ENCODE measurements at regions of chr18 and their contacts with region 1.

Region 1: GRCh38 chr18:3245853-3246634 is 1.6 kb upstream of the MYL12A start:
- DNase-seq: peak; percentile 43 to 89
- ATAC-seq: peak; percentile 79 to 83
- H3K4me3 ChIP-seq: peak overlapping the region; percentile 41
- H3K27ac ChIP-seq: peak overlapping the region; percentile 93 to 98
- H3K4me1 ChIP-seq: peaks cover 24% of the 10 kb centered on the region
- CTCF ChIP-seq: peak; percentile 81
- EP300 ChIP-seq: no peak
- POLR2A ChIP-seq: no peak
- RAD21 ChIP-seq: peak; percentile 96 to 97

Region 2: GRCh38 chr18:2774669-2775068 is 471.4 kb before region 1 on chr18:
- CTCF ChIA-PET with region 1: interaction called, 22 read pairs
- POLR2A ChIA-PET with region 1: no interaction called
- DNase-seq: no peak
- ATAC-seq: no peak
- H3K4me3 ChIP-seq: no peak overlapping the region
- H3K27ac ChIP-seq: no peak overlapping the region
- H3K4me1 ChIP-seq: no peaks in the 10 kb centered on the region
- CTCF ChIP-seq: no peak
- EP300 ChIP-seq: no peak
- POLR2A ChIP-seq: no peak
- RAD21 ChIP-seq: no peak

Region 3: GRCh38 chr18:2932247-2933181 is 313.5 kb before region 1 on chr18:
- CTCF ChIA-PET with region 1: interaction called, 35 read pairs
- POLR2A ChIA-PET with region 1: interaction called, 3 read pairs
- DNase-seq: peak; percentile 21 to 50
- ATAC-seq: peak; percentile 54 to 55; a peak in 4 of 6 replicates
- H3K4me3 ChIP-seq: no peak overlapping the region
- H3K27ac ChIP-seq: peak overlapping the region; percentile 27 to 71; a peak in 4 of 6 replicates
- H3K4me1 ChIP-seq: peaks cover 29% of the 10 kb centered on the region
- CTCF ChIP-seq: peak; percentile 77
- EP300 ChIP-seq: no peak
- POLR2A ChIP-seq: no peak
- RAD21 ChIP-seq: peak; percentile 80 to 86

Region 4: GRCh38 chr18:2939317-2939716 is 306.7 kb before region 1 on chr18:
- CTCF ChIA-PET with region 1: interaction called, 35 read pairs
- POLR2A ChIA-PET with region 1: interaction called, 3 read pairs
- DNase-seq: peak; percentile 58 to 74
- ATAC-seq: peak; percentile 92 to 94
- H3K4me3 ChIP-seq: no peak overlapping the region
- H3K27ac ChIP-seq: peak overlapping the region; percentile 66 to 84
- H3K4me1 ChIP-seq: peaks cover 38% of the 10 kb centered on the region
- CTCF ChIP-seq: no peak
- EP300 ChIP-seq: no peak
- POLR2A ChIP-seq: no peak
- RAD21 ChIP-seq: no peak; a peak in 1 of 5 replicates

Region 5: GRCh38 chr18:2948038-2948437 is 298.0 kb before region 1 on chr18:
- CTCF ChIA-PET with region 1: interaction called, 13 read pairs
- POLR2A ChIA-PET with region 1: no interaction called
- DNase-seq: peak; percentile 15 to 54
- ATAC-seq: peak; percentile 59 to 70; a peak in 5 of 6 replicates
- H3K4me3 ChIP-seq: no peak overlapping the region
- H3K27ac ChIP-seq: no peak overlapping the region
- H3K4me1 ChIP-seq: no peaks in the 10 kb centered on the region
- CTCF ChIP-seq: peak; percentile 47
- EP300 ChIP-seq: no peak
- POLR2A ChIP-seq: no peak
- RAD21 ChIP-seq: peak; percentile 33 to 36; a peak in 2 of 5 replicates

Region 6: DNA sequence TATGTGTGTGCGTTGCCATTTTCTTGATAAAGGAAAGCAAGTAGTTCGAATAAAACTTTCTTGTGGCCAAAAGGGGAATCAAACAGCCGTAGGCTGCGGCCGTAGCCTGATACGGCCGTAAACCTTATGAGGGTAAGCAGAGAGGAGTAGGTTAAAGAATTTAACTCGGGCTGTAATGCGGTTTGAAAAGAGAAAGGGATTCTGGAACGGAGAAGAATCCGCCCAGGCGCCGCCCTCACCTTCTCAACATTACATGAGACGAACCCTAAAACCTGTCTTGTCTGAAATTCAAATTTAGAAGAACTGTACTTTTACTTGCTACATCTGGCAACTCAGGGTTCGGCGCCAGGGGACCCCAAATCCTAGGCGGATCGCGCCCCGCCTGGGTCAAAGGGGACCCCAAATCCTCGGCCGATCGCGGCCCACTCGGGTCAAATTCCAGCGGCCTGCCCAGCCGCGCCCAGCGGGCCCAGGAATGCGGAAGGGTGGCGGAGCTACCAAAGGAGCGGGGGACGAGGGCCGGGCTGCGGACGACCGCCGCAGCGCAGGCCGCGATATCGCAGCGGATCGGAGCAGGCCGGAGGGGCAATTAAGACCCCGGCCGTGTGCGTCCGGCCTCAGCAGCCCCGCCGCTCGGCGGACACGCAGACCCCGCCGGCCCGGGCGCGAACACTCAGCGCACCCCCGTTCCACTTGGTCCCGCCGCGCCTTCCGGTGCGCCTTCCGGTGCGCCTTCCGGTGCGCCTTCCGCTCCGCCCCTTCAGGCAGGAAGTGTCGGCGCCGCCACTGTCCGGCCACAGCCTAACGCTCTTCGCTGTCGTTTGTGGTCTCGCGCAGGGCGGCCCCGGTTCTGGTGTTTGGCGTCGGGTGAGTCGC is 15.6 kb after region 1 on chr18 and contains the start of gene MYL12B:
- CTCF ChIA-PET with region 1: interaction called, 5 read pairs
- POLR2A ChIA-PET with region 1: interaction called, 14 read pairs
- DNase-seq: peak; percentile 43 to 82
- ATAC-seq: peak; percentile 89 to 93
- H3K4me3 ChIP-seq: peak within 1 kb of the TSS; percentile 94
- H3K27ac ChIP-seq: peak within 1 kb of the TSS; percentile 99 to 100
- H3K4me1 ChIP-seq: peaks cover 42% of the 10 kb centered on the region
- CTCF ChIP-seq: no peak
- EP300 ChIP-seq: peak in 1 of 2 experiments; percentile 36; a peak in 1 of 5 replicates
- POLR2A ChIP-seq: peak; percentile 59
- RAD21 ChIP-seq: no peak
- polyA plus RNA-seq, gene MYL12B: 484 and 498 TPM in 2 replicates

Region 7: DNA sequence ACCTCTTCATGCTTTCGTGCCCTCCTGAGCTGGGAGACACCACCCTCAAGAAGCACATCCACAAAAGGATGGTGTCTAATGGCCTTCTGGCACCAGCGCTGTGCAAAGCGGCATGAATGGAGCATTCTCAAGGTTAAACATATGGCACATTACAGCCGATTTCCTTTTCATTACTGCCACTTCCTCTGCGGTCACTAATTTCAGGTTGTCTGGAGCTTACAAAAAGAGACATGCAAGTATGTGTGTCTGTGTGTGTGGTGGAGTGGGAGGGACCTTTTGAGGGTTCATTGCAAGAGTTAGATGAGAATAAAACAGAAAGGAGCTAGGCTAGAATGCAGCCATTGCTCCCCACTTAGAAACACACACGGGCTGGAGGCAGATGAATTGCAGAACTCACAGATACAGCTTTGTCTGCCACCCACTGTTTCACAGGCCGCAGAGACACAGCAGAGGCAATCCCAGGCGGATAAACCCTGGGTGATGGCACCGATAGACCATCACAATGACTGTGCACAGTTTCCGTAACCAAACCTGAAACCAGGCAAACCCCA is 279.9 kb after region 1 on chr18:
- CTCF ChIA-PET with region 1: no interaction called
- POLR2A ChIA-PET with region 1: no interaction called
- DNase-seq: no peak
- ATAC-seq: no peak
- H3K4me3 ChIP-seq: no peak overlapping the region
- H3K27ac ChIP-seq: no peak overlapping the region
- H3K4me1 ChIP-seq: no peaks in the 10 kb centered on the region
- CTCF ChIP-seq: no peak
- EP300 ChIP-seq: no peak
- POLR2A ChIP-seq: no peak
- RAD21 ChIP-seq: no peak